Calu3 (cell line): ENCODE measurements at regions of chr7 and their contacts with region 1.

Region 1: DNA sequence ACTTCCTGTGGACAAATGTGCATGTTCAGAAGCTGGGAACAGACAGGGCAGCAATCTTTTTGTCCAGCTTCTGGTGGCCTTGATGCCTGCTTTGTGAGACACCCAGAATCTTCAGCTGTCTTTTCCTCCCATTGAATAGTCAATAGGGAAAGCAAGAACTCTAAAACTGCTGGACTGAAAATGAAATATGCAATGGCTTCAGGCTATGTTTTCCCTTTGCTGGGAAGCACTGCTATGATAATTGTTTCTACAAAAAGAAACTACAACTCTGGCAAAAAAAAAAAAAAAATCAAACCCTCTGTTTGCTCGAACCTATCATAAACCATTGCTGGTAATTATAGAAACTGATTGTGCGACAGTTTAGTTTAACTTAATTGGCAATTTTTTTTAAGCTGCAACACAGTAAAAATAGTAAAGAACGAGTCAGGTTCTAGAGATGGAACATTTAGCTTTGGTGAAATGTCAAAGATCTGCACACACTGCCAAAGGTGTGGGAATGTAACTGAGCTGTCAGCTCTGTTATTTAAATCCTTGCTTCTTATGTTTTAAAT is 79.1 kb upstream of the NEUROD6 start:
- DNase-seq: no peak
- H3K4me3 Mint-ChIP-seq: no peak overlapping the region
- H3K27ac Mint-ChIP-seq: no peak overlapping the region
- H3K4me1 Mint-ChIP-seq: no peaks in the 10 kb centered on the region
- H3K27me3 Mint-ChIP-seq: no peaks in the 10 kb centered on the region
- CTCF ChIP-seq: no peak

Region 2: DNA sequence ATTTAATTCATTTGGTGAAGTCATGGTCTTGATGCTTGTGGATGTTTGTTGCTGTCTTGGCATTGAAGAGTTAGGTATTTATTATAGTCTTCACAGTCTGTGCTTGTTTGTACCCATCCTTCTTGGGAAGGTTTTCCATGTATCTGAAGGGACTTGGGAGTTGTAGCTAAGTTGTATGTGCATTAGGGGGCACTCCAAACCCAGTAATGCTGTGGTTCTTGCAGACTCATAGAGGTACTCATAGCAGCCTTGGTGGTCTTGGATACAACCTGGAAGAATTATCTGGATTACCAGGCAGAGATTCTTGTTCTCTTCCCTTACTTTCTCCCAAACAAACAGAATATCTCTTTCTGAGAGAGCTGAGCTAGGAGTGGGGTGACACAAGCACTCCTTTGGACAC is 274.2 kb before region 1 on chr7:
- CTCF ChIA-PET with region 1: no interaction called
- intact Hi-C with region 1: no loop called
- DNase-seq: no peak
- H3K4me3 Mint-ChIP-seq: no peak overlapping the region
- H3K27ac Mint-ChIP-seq: no peak overlapping the region
- H3K4me1 Mint-ChIP-seq: no peaks in the 10 kb centered on the region
- H3K27me3 Mint-ChIP-seq: peaks cover 95% of the 10 kb centered on the region
- CTCF ChIP-seq: peak; percentile 16

Region 3: DNA sequence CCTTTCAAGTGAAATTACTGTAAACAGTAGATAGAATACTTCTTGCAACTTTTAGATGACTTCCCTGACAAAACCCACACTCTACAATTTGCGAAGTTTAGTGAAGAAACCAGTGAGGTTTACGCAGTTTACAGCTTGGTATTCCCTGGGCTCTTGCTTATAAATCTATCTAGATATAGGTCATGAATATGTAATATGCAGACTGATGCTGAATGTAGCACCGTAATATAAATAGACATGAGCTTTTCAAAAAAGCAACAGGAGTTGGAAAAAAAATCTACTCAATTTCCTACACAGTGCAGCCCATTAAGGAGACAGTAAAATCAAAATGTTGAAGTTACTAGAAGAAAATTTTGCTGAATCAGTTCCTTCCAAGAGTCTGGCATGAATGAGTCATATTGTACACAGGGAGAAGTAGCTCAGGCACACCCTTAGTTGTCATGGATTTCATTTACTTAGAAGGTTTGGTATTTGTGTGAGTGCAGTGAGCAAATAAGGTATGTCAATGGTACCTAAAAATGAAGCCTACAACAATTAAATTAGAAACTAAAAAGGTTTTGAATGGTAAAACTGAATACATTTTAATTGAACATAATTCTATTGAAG is 11.3 kb before region 1 on chr7:
- CTCF ChIA-PET with region 1: interaction called, 10 read pairs
- intact Hi-C with region 1: no loop called
- DNase-seq: peak; percentile 36
- H3K4me3 Mint-ChIP-seq: no peak overlapping the region
- H3K27ac Mint-ChIP-seq: peak overlapping the region; percentile 50
- H3K4me1 Mint-ChIP-seq: peaks cover 28% of the 10 kb centered on the region
- H3K27me3 Mint-ChIP-seq: no peaks in the 10 kb centered on the region
- CTCF ChIP-seq: no peak